Endothelial cell of umbilical vein (primary cell): ENCODE measurements at regions of chr12 and their contacts with region 1.

Region 1: GRCh38 chr12:9319044-9319841 is 111.0 kb upstream of the PZP start:
- DNase-seq: no peak
- H3K4me3 ChIP-seq: no peak overlapping the region
- H3K27ac ChIP-seq: no peak overlapping the region
- H3K4me1 ChIP-seq: no peaks in the 10 kb centered on the region
- H3K27me3 ChIP-seq: peaks cover 0 to 1% of the 10 kb centered on the region in 2 experiments
- CTCF ChIP-seq: no peak
- POLR2A ChIP-seq: no peak

Region 2: DNA sequence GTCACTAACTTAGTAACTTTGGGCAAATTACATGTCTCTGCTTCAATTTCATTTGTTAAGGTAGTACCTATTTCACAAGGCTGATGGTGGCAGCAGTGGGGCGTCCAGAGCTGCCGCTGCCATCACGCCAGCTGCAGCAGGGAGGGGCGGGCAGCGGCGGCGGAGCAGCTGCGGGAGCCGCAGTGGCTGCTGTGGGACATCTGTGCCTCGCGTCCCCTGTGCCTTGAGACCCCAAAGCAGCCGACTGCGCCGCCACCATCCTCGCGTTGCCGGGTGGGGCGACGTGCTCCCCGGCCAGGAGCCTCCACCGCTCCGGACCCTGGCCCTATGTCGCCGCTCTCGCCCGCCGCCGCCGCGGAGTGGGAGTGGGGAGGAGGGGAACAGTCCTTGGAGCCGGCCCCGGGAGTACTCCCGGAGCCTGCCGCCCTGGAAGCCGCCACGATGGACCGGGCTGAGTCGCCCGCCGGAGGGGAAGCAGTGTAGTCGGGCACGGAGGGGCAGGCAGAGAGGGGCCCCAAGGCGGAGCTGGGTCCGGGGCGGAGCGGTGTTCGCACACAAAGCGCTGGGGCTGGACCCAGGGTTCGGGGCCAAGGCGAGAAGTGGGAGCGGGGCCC is 254.9 kb before region 1 on chr12:
- CTCF ChIA-PET with region 1: interaction called, 10 read pairs
- POLR2A ChIA-PET with region 1: no interaction called
- dilution Hi-C with region 1: no loop called
- intact Hi-C with region 1: no loop called
- DNase-seq: peak; percentile 83
- H3K4me3 ChIP-seq: peak overlapping the region; percentile 69 to 95 (median 76)
- H3K27ac ChIP-seq: peak overlapping the region; percentile 57
- H3K4me1 ChIP-seq: peaks cover 4% of the 10 kb centered on the region
- H3K27me3 ChIP-seq: peaks cover 4 to 6% of the 10 kb centered on the region in 2 experiments
- CTCF ChIP-seq: peak; percentile 32 to 57
- POLR2A ChIP-seq: no peak

Region 3: DNA sequence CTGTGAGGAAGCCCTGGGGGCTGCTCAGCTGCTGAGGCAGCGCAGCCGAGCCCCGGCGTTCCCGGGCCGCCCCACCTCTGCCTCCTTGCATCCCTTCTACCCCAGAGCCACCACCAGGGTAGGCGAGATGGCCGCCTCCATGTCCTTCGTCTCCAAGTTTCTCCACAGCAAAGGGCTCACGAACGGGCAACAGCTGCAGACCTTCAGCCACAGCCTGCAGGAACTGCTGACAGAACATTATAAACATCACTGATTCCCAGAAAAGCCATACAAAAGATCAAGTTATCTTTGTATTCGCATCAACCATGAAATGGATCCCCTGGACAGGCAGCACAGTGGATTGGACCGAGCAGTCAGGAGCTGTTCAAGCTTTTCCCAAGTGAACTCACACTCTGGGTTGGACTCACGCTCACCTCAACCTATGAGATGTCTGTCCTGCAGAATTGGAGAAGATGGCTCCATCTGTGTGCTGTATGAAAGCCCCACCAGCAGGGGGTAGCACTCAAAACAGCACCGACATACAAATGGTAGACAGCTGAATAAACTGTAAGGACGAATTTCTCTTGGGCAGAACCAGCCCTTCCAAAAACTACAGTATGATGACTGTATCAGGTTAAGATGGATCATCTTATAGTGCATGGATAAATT is 184.1 kb before region 1 on chr12:
- CTCF ChIA-PET with region 1: no interaction called
- POLR2A ChIA-PET with region 1: no interaction called
- dilution Hi-C with region 1: no loop called
- intact Hi-C with region 1: loop called (anchors 2 kb)
- DNase-seq: peak; percentile 11
- H3K4me3 ChIP-seq: no peak overlapping the region
- H3K27ac ChIP-seq: no peak overlapping the region
- H3K4me1 ChIP-seq: no peaks in the 10 kb centered on the region
- H3K27me3 ChIP-seq: peaks cover 2 to 3% of the 10 kb centered on the region in 2 experiments
- CTCF ChIP-seq: peak; percentile 35 to 39
- POLR2A ChIP-seq: no peak

Region 4: GRCh38 chr12:9364224-9365176 is 45.3 kb after region 1 on chr12:
- CTCF ChIA-PET with region 1: no interaction called
- POLR2A ChIA-PET with region 1: no interaction called
- dilution Hi-C with region 1: no loop called
- intact Hi-C with region 1: no loop called
- DNase-seq: no peak
- H3K4me3 ChIP-seq: no peak overlapping the region
- H3K27ac ChIP-seq: no peak overlapping the region
- H3K4me1 ChIP-seq: no peaks in the 10 kb centered on the region
- H3K27me3 ChIP-seq: peaks cover 3 to 15% of the 10 kb centered on the region in 2 experiments
- CTCF ChIP-seq: no peak
- POLR2A ChIP-seq: no peak